ENCODE measurements at regions of chr1 and their contacts with region 1.

Region 1: DNA sequence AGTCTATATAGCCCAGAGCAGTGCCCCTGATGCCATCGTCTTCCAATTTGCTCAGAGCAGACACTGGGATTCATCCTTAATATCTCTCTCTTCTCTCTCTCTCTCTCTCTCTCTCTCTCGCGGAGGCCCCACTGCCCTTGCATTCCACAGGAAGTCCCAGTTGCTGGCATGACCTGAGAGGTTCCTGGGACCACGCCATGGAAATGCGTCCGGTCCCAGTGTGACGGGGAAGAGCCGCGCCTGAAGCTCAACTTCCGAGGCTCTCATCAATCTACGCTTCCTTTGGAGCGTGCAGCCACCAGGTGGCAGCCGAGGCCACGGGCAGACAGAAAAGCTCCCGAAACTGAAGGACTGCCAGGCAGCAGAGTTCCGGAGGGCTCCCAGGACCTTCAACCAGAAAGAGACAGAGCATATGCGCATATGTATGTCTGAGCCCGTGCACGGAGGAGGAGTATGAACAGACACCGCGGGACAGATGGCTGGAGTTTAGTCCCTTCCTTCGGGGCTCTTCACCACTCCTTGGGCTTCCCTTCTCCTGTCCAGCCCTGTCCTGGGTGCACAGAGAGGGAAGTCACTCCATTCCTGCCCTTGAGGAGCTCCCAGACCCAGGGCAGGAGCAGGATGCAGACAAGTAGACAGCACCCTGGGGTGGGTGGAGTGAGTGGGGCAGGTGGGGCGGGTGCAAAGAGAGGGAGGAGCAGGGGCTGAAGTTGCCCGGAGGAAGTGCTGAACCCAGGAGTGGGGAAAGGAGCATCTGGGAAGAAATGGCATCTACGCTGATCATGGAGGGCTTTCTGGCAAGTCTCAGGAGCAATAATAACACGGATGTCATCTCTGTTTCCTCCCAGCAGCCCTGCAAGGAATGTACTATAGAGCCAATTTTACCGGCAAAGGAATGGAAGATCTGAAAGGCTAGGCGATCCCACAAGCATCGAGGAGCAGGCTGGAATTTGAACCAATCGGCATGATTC is 10.5 kb downstream of the PDZK1IP1 start:
- DNase-seq: peak; percentile 45 to 60 (median 58)
- H3K4me3 ChIP-seq: peak overlapping the region; percentile 34 to 53
- H3K4me3 Mint-ChIP-seq: peak overlapping the region; percentile 76 to 88 (median 86)
- H3K27ac ChIP-seq: no peak overlapping the region
- H3K27ac Mint-ChIP-seq: peak overlapping the region in 3 of 7 donors; percentile 32 to 75 (median 66)
- H3K4me1 ChIP-seq: peaks cover 7% of the 10 kb centered on the region
- H3K4me1 Mint-ChIP-seq: peaks cover 9 to 17% (median 13%) of the 10 kb centered on the region in 4 donors
- H3K27me3 ChIP-seq: peaks cover 10% of the 10 kb centered on the region
- H3K27me3 Mint-ChIP-seq: peaks cover 15 to 40% of the 10 kb centered on the region in 2 donors

Region 2: GRCh38 chr1:47201179-47201578 is 21.9 kb after region 1 on chr1:
- CTCF ChIA-PET with region 1: interaction called, 13 read pairs
- POLR2A ChIA-PET with region 1: no interaction called
- intact Hi-C with region 1: no loop called
- DNase-seq: no peak
- H3K4me3 ChIP-seq: no peak overlapping the region
- H3K4me3 Mint-ChIP-seq: no peak overlapping the region
- H3K27ac ChIP-seq: no peak overlapping the region
- H3K27ac Mint-ChIP-seq: no peak overlapping the region
- H3K4me1 ChIP-seq: no peaks in the 10 kb centered on the region
- H3K4me1 Mint-ChIP-seq: peaks cover 0 to 5% (median under 1%) of the 10 kb centered on the region in 4 donors
- H3K27me3 ChIP-seq: no peaks in the 10 kb centered on the region
- H3K27me3 Mint-ChIP-seq: peaks cover 34 to 36% of the 10 kb centered on the region in 2 donors

Region 3: DNA sequence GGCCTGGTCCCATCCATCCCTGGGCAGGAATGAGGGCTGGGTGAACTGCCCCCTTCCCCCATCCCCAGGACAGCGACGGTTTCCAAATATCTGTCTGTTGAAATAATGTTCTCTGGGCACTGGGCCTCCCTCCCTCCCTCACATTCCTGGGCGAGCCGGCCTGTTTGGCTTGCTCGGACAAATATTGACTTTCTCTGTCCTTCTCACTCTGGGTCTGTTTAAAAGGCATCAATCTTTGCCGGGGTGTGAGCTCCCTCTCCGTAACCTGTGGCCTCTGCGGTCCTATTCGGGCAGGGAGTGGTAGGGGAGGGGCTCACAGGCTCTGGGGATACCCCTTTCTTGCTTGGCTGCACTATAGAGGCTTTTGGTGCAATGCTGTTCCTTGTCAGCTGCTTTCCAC is 298.8 kb after region 1 on chr1:
- CTCF ChIA-PET with region 1: no interaction called
- POLR2A ChIA-PET with region 1: no interaction called
- intact Hi-C with region 1: no loop called
- DNase-seq: no peak
- H3K4me3 ChIP-seq: no peak overlapping the region
- H3K4me3 Mint-ChIP-seq: no peak overlapping the region
- H3K27ac ChIP-seq: no peak overlapping the region
- H3K27ac Mint-ChIP-seq: no peak overlapping the region
- H3K4me1 ChIP-seq: no peaks in the 10 kb centered on the region
- H3K4me1 Mint-ChIP-seq: no peaks in the 10 kb centered on the region
- H3K27me3 ChIP-seq: no peaks in the 10 kb centered on the region
- H3K27me3 Mint-ChIP-seq: peaks cover 14 to 19% of the 10 kb centered on the region in 2 donors

Region 4: GRCh38 chr1:47725992-47726855 is 546.9 kb after region 1 on chr1:
- CTCF ChIA-PET with region 1: interaction called, 10 read pairs
- POLR2A ChIA-PET with region 1: no interaction called
- intact Hi-C with region 1: no loop called
- DNase-seq: peak; percentile 38 to 56 (median 48)
- H3K4me3 ChIP-seq: no peak overlapping the region
- H3K4me3 Mint-ChIP-seq: peak overlapping the region; percentile 53 to 86 (median 76)
- H3K27ac ChIP-seq: no peak overlapping the region
- H3K27ac Mint-ChIP-seq: no peak overlapping the region
- H3K4me1 ChIP-seq: peaks cover 4% of the 10 kb centered on the region
- H3K4me1 Mint-ChIP-seq: peaks cover 3 to 12% (median 9%) of the 10 kb centered on the region in 4 donors
- H3K27me3 ChIP-seq: peaks cover 12% of the 10 kb centered on the region
- H3K27me3 Mint-ChIP-seq: peaks cover 30% of the 10 kb centered on the region in 2 donors

Measured in CD4-positive, alpha-beta memory T cell (primary cell).